GM12878 (cell line): ENCODE measurements at regions of chr4 and their contacts with region 1.

Region 1: GRCh38 chr4:146342600-146343192 is 128.4 kb downstream of the REELD1 start:
- DNase-seq: no peak
- ATAC-seq: peak; percentile 44
- H3K4me3 ChIP-seq: no peak overlapping the region
- H3K27ac ChIP-seq: no peak overlapping the region
- H3K4me1 ChIP-seq: peaks cover 13% of the 10 kb centered on the region
- H3K27me3 ChIP-seq: no peaks in the 10 kb centered on the region
- CTCF ChIP-seq: peak; percentile 34 to 55 (median 40); a peak in 4 of 6 replicates
- EP300 ChIP-seq: no peak
- POLR2A ChIP-seq: no peak
- RAD21 ChIP-seq: peak; percentile 85

Region 2: DNA sequence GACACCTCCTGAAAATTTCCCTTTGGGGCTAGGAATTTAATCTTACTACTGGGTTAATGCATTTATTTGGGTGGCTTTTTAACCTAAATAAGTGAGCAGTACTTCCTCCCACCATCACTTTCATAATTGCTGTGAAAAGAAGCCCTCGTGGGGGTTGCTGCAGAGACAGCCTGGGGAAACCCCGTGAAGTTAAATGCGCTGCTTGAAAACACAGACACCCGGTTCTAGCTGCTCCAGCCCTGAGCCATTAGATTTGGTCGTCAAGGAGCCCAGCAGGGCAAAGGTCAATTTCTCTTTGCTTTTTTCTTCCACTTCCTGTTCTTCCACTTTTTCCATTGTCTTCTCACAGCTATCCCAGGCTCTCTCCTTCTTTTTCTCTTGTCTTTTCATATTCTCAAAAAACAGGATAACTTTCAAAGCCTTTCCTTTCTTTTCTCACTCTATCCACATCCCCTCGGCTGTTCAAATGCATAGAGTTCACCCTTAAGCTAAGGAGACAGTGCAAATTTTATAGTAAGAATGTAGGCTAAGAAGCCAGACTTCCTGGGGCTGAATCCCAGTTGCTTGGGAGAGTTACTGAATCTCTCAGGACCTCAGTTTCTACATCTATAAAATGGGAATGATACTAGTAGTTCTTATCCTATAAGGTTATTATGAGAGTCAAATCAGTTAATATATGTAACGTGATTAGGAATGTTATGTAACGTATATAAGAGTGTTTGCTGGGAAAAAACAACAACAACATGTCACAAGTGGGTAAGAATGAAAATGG is 312.6 kb before region 1 on chr4:
- CTCF ChIA-PET with region 1: no interaction called
- POLR2A ChIA-PET with region 1: no interaction called
- RAD21 ChIA-PET with region 1: interaction called, 6 read pairs
- SMC1A ChIA-PET with region 1: interaction called, 3 read pairs
- in situ Hi-C with region 1: no loop called
- intact Hi-C with region 1: loop called (anchors 5 kb)
- DNase-seq: peak; percentile 48
- ATAC-seq: peak; percentile 89
- H3K4me3 ChIP-seq: peak overlapping the region; percentile 56
- H3K27ac ChIP-seq: peak overlapping the region; percentile 88
- H3K4me1 ChIP-seq: peaks cover 45% of the 10 kb centered on the region
- H3K27me3 ChIP-seq: no peaks in the 10 kb centered on the region
- CTCF ChIP-seq: no peak
- EP300 ChIP-seq: no peak
- POLR2A ChIP-seq: no peak
- RAD21 ChIP-seq: 0 out of 2 replicates have a peak, but pooled peaks have one; percentile 22

Region 3: DNA sequence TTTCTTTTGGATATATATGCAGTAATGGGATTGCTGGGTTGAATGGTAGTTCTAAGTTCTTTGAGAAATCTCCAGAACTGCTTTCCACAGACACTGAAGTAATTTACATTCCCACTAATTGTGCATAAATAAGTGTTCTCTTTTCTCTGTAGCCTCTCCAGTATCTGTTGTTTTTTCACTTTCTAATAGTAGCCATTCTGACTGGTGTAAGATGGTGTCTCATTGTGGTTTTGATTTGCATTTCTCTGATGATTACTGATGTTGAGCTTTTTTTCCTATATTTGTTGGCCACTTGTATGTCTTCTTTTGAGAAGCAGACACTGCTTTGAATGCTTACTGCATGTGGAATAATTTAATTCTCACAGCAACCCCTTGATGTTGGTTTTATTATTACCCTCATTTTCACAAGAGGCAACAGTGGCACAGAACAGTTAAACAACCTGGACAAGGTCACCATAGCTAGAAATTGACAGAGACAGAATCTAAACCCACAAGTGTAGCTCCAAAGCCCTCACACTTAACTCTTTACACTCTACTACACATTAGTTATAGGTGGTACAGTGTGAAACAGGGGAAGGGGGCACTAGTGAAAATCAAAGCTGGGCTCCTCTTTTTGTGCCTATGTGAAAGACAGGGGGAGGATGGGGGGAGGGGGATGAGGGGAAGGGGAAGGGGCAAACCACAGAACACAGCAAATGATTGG is 32.2 kb before region 1 on chr4:
- CTCF ChIA-PET with region 1: interaction called, 14 read pairs
- POLR2A ChIA-PET with region 1: no interaction called
- RAD21 ChIA-PET with region 1: interaction called, 4 read pairs
- SMC1A ChIA-PET with region 1: interaction called, 6 read pairs
- in situ Hi-C with region 1: no loop called
- intact Hi-C with region 1: no loop called
- DNase-seq: peak; percentile 35
- ATAC-seq: peak; percentile 91
- H3K4me3 ChIP-seq: no peak overlapping the region
- H3K27ac ChIP-seq: peak overlapping the region; percentile 55; the same call in 1 of the 2 replicates
- H3K4me1 ChIP-seq: peaks cover 18% of the 10 kb centered on the region
- H3K27me3 ChIP-seq: no peaks in the 10 kb centered on the region
- CTCF ChIP-seq: no peak
- EP300 ChIP-seq: 0 out of 4 replicates have a peak, but pooled peaks of 1 of the 2 experiments have one; percentile 15
- POLR2A ChIP-seq: no peak
- RAD21 ChIP-seq: no peak

Region 4: DNA sequence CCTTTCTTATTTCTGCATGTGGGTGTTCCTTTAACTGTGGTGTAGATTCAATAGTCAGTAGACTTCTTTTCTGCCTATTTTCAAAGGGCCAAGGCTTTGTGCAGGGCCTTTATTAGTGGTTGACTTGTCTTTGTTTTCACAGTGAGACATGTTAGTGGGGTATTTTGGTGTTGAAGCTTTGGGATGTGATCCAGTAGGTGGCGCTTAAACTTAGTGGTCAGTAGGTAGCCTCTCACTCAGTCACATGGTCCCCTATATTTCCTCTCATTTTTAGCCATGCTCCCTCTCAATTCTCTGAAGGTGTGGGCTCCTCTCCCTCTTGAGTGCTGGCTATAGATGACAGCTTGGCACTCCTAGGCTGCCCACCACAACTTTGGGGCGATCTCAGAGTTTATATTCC is 202.4 kb after region 1 on chr4:
- CTCF ChIA-PET with region 1: interaction called, 18 read pairs
- POLR2A ChIA-PET with region 1: no interaction called
- RAD21 ChIA-PET with region 1: interaction called, 3 read pairs
- SMC1A ChIA-PET with region 1: interaction called, 7 read pairs
- in situ Hi-C with region 1: no loop called
- intact Hi-C with region 1: no loop called
- DNase-seq: no peak
- ATAC-seq: peak; percentile 92
- H3K4me3 ChIP-seq: no peak overlapping the region
- H3K27ac ChIP-seq: no peak overlapping the region
- H3K4me1 ChIP-seq: no peaks in the 10 kb centered on the region
- H3K27me3 ChIP-seq: no peaks in the 10 kb centered on the region
- CTCF ChIP-seq: peak; percentile 34 to 47 (median 41)
- EP300 ChIP-seq: no peak
- POLR2A ChIP-seq: no peak
- RAD21 ChIP-seq: peak; percentile 20; the same call in 1 of the 2 replicates

Region 5: DNA sequence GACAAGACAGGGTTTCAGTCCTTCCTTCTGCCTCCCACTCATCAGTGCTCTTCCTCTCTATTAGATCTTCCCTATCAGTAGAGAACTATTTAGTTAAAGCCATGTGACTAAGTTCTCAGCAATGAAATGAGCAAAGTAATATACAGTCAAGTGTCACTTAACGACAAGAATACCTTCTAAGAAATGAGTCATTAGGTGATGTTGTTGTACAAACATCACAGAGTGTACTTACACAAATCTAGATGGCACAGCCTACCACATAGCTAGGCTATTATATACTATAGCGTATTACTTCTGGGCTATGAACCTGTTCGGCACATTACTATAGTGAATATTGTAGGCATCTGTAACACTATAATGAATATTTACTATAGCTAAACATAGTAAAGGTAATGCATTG is 367.3 kb after region 1 on chr4:
- CTCF ChIA-PET with region 1: no interaction called
- POLR2A ChIA-PET with region 1: no interaction called
- RAD21 ChIA-PET with region 1: no interaction called
- SMC1A ChIA-PET with region 1: no interaction called
- in situ Hi-C with region 1: no loop called
- intact Hi-C with region 1: loop called (anchors 10 kb)
- DNase-seq: no peak
- ATAC-seq: no peak
- H3K4me3 ChIP-seq: no peak overlapping the region
- H3K27ac ChIP-seq: no peak overlapping the region
- H3K4me1 ChIP-seq: no peaks in the 10 kb centered on the region
- H3K27me3 ChIP-seq: peaks cover 0 to 2% of the 10 kb centered on the region in 2 experiments; a peak in 1 of 4 replicates
- CTCF ChIP-seq: no peak
- EP300 ChIP-seq: no peak
- POLR2A ChIP-seq: no peak
- RAD21 ChIP-seq: no peak

Region 6: GRCh38 chr4:147003956-147004809 is 661.5 kb after region 1 on chr4:
- CTCF ChIA-PET with region 1: no interaction called
- POLR2A ChIA-PET with region 1: no interaction called
- RAD21 ChIA-PET with region 1: no interaction called
- SMC1A ChIA-PET with region 1: no interaction called
- in situ Hi-C with region 1: no loop called
- intact Hi-C with region 1: loop called (anchors 10 kb)
- DNase-seq: no peak
- ATAC-seq: no peak
- H3K4me3 ChIP-seq: no peak overlapping the region
- H3K27ac ChIP-seq: no peak overlapping the region
- H3K4me1 ChIP-seq: no peaks in the 10 kb centered on the region
- H3K27me3 ChIP-seq: no peaks in the 10 kb centered on the region
- CTCF ChIP-seq: no peak
- EP300 ChIP-seq: no peak
- POLR2A ChIP-seq: no peak
- RAD21 ChIP-seq: no peak